ENCODE measurements at regions of chr1 and their contacts with region 1.

Region 1: GRCh38 chr1:150578965-150579798 is at the start of gene MCL1:
- DNase-seq: peak; percentile 98
- H3K4me3 ChIP-seq: peak within 1 kb of the TSS; percentile 64 to 100 (median 88)
- H3K27ac ChIP-seq: peak within 1 kb of the TSS; percentile 93 to 100 (median 98)
- H3K4me1 ChIP-seq: peaks cover 12 to 36% (median 28%) of the 10 kb centered on the region in 4 donors
- H3K27me3 ChIP-seq: no peaks in the 10 kb centered on the region
- CTCF ChIP-seq: peak in 2 of 3 experiments; percentile 9 to 22
- EP300 ChIP-seq: no peak
- POLR2A ChIP-seq: peak; percentile 98
- total RNA-seq, gene MCL1: 192 to 460 (median 255) TPM

Region 2: DNA sequence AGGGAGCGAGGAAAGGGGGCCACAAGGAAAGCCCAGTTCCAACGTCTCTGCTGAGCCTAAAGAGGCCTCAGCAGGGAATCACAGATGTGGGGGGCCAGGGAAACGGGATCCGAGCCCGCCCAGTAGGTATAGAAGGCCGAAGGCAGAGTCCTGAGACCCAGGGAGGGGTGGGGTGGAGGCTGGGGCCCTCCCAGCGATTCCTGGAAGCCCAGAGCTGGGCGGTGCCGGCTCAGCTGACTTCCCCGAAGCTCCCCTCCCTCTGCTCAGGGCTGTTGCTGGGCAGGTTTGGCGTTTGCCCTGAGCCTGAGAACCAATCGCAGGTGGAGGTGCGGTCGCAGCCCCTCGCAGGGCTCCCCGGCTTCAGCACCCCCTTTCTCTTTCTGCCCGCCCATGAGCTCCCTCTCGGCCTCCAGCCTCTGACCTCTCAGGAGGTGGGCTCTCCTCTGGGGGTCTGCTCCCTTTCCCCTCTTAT is 17.2 kb before region 1 on chr1:
- intact Hi-C with region 1: loop called (anchors 1 kb)
- DNase-seq: peak; percentile 98
- H3K4me3 ChIP-seq: peak overlapping the region; percentile 59 to 64 (median 61)
- H3K27ac ChIP-seq: peak overlapping the region; percentile 93 to 100 (median 98)
- H3K4me1 ChIP-seq: peaks cover 76 to 95% (median 88%) of the 10 kb centered on the region in 4 donors
- H3K27me3 ChIP-seq: no peaks in the 10 kb centered on the region
- CTCF ChIP-seq: no peak
- EP300 ChIP-seq: peak; percentile 92
- POLR2A ChIP-seq: no peak

Region 3: GRCh38 chr1:150621497-150622302 is 42.5 kb after region 1 on chr1:
- intact Hi-C with region 1: loop called (anchors 5 kb)
- DNase-seq: peak; percentile 92
- H3K4me3 ChIP-seq: no peak overlapping the region
- H3K27ac ChIP-seq: peak overlapping the region; percentile 70 to 78 (median 75)
- H3K4me1 ChIP-seq: peaks cover 42 to 51% (median 46%) of the 10 kb centered on the region in 4 donors
- H3K27me3 ChIP-seq: no peaks in the 10 kb centered on the region
- CTCF ChIP-seq: peak; percentile 76 to 84 (median 77)
- EP300 ChIP-seq: no peak
- POLR2A ChIP-seq: peak; percentile 8

Measured in esophagus muscularis mucosa (tissue), 4 donors.